Activated CD8-positive, alpha-beta memory T cell treated with anti-CD3 and anti-CD28 coated beads, Interleukin-2, amount 10 ng/mL, durations not matched to agents 7 days and 5 days (primary cell): ENCODE measurements at regions of chr2 and their contacts with region 1.

Region 1: DNA sequence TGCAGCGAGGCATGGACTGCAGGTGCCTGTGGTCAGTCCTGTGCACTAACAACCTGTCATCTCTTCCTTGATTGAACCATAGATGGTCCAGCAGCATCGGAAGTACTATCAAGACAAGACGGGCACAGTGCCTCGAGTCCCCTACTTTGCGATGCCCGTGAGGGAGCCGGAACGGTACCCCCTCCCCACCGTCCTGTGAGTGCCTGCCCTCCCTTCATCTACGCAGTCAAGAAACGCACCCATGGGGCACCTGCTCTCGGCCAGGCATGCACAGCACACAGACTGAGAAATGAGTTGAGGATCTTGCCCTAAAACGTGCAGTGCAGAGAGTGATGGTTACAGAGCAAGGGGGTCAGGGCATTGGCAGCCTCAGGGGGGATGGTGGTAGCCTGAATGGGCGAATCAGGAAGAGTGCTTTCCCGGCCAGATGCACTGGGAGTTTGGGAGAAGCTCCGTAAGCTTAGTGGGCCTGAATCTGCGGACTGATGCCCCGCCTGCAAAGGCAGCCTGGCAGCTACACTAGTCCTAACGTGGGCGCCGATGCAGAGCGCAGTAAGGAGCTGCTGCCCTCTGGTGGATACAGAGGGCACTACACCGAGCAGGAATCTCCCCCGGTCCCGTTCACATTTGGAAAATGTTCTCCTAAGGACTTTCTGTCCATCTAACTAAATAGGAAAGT is 63.6 kb downstream of the CIB4 start:
- DNase-seq: peak; percentile 71
- ATAC-seq: peak; percentile 89
- H3K4me3 Mint-ChIP-seq: no peak overlapping the region
- H3K27ac Mint-ChIP-seq: no peak overlapping the region
- H3K4me1 Mint-ChIP-seq: peaks cover 3% of the 10 kb centered on the region
- H3K27me3 Mint-ChIP-seq: peaks cover 6% of the 10 kb centered on the region

Region 2: GRCh38 chr2:26555246-26556133 is 22.1 kb before region 1 on chr2:
- CTCF ChIA-PET with region 1: interaction called, 20 read pairs
- DNase-seq: no peak
- ATAC-seq: no peak
- H3K4me3 Mint-ChIP-seq: no peak overlapping the region
- H3K27ac Mint-ChIP-seq: no peak overlapping the region
- H3K4me1 Mint-ChIP-seq: no peaks in the 10 kb centered on the region
- H3K27me3 Mint-ChIP-seq: peaks cover 58% of the 10 kb centered on the region

Region 3: GRCh38 chr2:26591619-26592505 is 14.3 kb after region 1 on chr2:
- CTCF ChIA-PET with region 1: interaction called, 17 read pairs
- DNase-seq: no peak
- ATAC-seq: no peak
- H3K4me3 Mint-ChIP-seq: no peak overlapping the region
- H3K27ac Mint-ChIP-seq: no peak overlapping the region
- H3K4me1 Mint-ChIP-seq: peaks cover 8% of the 10 kb centered on the region
- H3K27me3 Mint-ChIP-seq: peaks cover 48% of the 10 kb centered on the region

Region 4: GRCh38 chr2:26605195-26605998 is 27.8 kb after region 1 on chr2:
- CTCF ChIA-PET with region 1: interaction called, 18 read pairs
- DNase-seq: peak; percentile 55
- ATAC-seq: peak; percentile 72
- H3K4me3 Mint-ChIP-seq: no peak overlapping the region
- H3K27ac Mint-ChIP-seq: no peak overlapping the region
- H3K4me1 Mint-ChIP-seq: no peaks in the 10 kb centered on the region
- H3K27me3 Mint-ChIP-seq: peaks cover 39% of the 10 kb centered on the region

Region 5: GRCh38 chr2:26933431-26934334 is 356.1 kb after region 1 on chr2:
- CTCF ChIA-PET with region 1: no interaction called
- DNase-seq: peak; percentile 33
- ATAC-seq: no peak
- H3K4me3 Mint-ChIP-seq: no peak overlapping the region
- H3K27ac Mint-ChIP-seq: no peak overlapping the region
- H3K4me1 Mint-ChIP-seq: no peaks in the 10 kb centered on the region
- H3K27me3 Mint-ChIP-seq: peaks cover 3% of the 10 kb centered on the region